ENCODE measurements at regions of chr11 and their contacts with region 1.

Region 1: DNA sequence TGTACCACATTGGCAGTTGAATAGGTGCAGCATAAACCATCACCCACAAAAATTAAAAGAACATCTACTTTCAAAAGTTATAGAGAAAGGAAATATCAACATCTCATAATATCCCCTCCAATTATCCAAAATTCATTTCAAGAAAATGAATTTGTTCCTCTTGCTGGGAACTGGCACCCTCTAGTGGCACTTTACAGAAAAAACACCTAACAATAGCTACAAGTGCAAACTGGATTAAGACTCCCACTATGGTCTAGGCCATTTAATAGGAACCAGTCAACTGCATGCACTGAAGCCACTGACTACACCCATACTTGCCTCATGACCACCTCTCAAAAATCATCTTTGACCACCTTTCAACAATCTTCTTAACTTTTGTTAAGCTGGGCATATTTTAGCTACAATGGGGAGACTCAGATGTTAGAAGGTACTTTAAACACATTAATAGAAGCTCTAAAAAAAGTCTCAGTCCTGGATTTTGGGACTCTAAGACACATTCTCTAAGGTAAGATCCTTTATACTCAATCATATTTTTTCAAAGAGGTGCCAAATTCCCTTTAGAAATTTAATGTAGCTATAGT is 17.3 kb downstream of the TRAF6 start:
- DNase-seq: peak; percentile 41 to 57 (median 50)
- H3K4me3 ChIP-seq: no peak overlapping the region
- H3K4me3 Mint-ChIP-seq: no peak overlapping the region
- H3K27ac ChIP-seq: peak overlapping the region in 1 of 2 donors; percentile 18
- H3K27ac Mint-ChIP-seq: peak overlapping the region in 2 of 7 donors; percentile 40 to 53
- H3K4me1 ChIP-seq: peaks cover 5 to 7% of the 10 kb centered on the region in 2 donors
- H3K4me1 Mint-ChIP-seq: peaks cover 11% of the 10 kb centered on the region
- H3K27me3 ChIP-seq: no peaks in the 10 kb centered on the region
- H3K27me3 Mint-ChIP-seq: no peaks in the 10 kb centered on the region
- CTCF ChIP-seq: peak; percentile 82

Region 2: DNA sequence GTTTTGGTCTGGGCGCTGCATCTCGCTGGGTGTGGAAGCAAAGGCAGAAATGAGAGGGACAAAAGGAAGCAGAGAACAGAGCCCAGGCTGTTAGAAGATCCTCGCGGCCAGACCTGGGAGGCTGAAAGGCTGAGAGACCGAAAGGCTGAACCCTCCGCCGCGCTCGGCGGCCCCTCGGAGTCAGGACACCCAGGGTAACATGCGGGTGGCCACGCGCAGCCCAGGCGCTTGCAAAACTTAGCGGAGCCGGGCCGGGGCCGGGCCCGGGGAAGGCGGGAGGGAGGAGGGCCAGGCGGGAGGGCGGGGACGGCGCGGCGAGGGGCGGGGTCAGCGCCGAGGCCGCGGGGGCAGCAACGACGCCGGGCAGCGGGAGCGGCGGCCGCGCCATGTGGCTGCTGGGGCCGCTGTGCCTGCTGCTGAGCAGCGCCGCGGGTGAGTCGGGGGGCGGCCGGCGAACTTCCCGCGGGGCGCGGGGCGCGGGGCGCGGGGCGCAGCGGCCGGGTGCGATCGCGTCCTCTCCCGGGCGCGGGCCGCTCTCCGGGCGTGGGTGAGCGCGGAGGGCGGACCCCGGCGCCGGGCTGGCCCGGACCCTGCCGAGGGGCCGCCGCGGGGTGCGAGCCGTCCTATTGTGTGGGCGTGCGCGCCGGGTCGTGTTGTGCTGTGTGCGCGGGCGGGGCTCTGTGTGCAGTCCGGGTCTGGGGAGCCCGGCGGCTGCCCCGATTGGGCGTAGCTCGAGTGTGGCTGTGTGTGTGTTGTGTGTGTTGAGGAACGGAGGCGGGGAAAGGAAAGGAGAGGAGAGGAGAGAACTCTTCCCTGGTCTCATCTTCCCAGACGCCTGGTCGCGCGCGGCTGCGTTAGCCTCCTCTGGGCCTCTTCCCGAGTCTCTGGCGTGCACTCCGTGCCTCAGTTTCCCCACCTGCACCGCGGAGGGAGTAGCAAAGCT is 548.8 kb before region 1 on chr11 and contains the start of gene LDLRAD3:
- intact Hi-C with region 1: loop called in 1 of 2 experiments (anchors 10 kb)
- DNase-seq: peak; percentile 52 to 57 (median 53)
- H3K4me3 ChIP-seq: peak within 1 kb of the TSS; percentile 66 to 84 (median 77)
- H3K4me3 Mint-ChIP-seq: peak within 1 kb of the TSS; percentile 96
- H3K27ac ChIP-seq: peak within 1 kb of the TSS; percentile 49 to 75
- H3K27ac Mint-ChIP-seq: peak within 1 kb of the TSS; percentile 26 to 91 (median 86)
- H3K4me1 ChIP-seq: peaks cover 21 to 25% of the 10 kb centered on the region in 2 donors
- H3K4me1 Mint-ChIP-seq: peaks cover 44% of the 10 kb centered on the region
- H3K27me3 ChIP-seq: no peaks in the 10 kb centered on the region
- H3K27me3 Mint-ChIP-seq: peaks cover 4 to 22% (median 21%) of the 10 kb centered on the region in 3 donors
- CTCF ChIP-seq: no peak
- polyA plus RNA-seq, gene LDLRAD3: 7.3 to 14.1 (median 10.4) TPM

Region 3: DNA sequence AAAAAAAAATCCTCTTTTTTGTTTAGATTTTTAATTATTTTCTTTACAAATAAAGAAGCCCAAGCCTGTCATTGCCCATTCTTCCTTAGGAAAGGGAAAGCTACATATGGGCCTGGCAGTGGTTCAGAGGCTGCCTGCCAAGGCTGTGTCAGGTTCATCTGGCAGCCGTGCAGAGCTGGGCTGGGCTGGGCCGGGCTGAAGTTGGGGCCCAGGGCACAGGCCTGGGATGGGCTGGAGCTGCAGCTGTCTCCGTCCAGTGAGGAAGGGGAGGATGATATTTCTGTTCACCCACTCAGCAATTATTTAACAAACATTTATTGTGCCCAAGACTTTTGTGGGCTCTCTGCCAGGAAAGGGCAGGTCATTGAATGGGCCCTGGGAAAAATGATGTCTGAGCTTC is 192.2 kb before region 1 on chr11:
- intact Hi-C with region 1: loop called in 1 of 2 experiments (anchors 5 kb)
- DNase-seq: no peak
- H3K4me3 ChIP-seq: no peak overlapping the region
- H3K4me3 Mint-ChIP-seq: no peak overlapping the region
- H3K27ac ChIP-seq: no peak overlapping the region
- H3K27ac Mint-ChIP-seq: no peak overlapping the region
- H3K4me1 ChIP-seq: peaks cover 24 to 29% of the 10 kb centered on the region in 2 donors
- H3K4me1 Mint-ChIP-seq: peaks cover 21% of the 10 kb centered on the region
- H3K27me3 ChIP-seq: no peaks in the 10 kb centered on the region
- H3K27me3 Mint-ChIP-seq: no peaks in the 10 kb centered on the region
- CTCF ChIP-seq: no peak